ENCODE measurements at regions of chr5 and their contacts with region 1.

Region 1: DNA sequence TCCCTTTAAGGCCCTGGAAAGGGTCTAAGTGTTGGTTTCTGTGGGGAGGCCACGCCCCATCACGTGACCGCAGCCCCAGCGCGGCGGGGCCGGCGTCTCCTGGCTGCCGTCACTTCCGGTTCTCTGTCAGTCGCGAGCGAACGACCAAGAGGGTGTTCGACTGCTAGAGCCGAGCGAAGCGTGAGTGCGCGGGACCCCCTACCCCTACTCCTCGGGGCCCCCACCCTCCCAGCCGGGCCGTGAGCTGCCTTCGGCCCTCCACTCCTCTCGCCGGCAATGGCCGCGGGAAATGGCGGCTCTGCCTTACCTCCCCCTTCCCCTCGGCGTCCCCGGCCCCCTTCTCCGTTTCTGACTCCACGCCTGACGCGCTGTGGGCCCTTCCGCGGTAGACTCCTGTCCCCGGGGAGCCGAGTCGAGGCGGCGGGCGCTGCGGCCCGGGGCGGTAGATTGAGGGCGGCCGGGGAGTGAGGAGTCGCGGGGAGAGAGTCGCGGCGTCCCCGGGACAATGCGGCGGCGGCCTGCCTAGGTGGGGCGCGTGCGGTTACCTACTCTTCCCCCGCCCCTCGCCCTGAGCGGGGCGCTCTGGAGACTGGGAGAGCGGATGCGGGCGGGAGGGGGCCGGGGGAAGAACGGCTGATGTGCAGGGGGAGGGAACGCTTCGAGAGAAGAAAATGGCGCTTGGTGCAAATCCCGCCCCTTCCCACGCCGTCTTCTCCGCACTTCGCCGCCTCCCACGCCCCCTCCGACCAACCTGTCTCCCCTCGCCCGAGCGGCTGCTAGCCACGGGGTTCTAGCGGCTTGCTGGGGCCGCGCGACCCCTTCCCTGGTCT is at the start of gene SUB1:
- DNase-seq: peak; percentile 97
- H3K4me3 ChIP-seq: peak within 1 kb of the TSS; percentile 89 to 97 (median 92)
- H3K27ac ChIP-seq: peak within 1 kb of the TSS; percentile 98 to 100 (median 99)
- H3K4me1 ChIP-seq: peaks cover 0 to 21% (median 14%) of the 10 kb centered on the region in 4 donors
- H3K27me3 ChIP-seq: no peaks in the 10 kb centered on the region
- CTCF ChIP-seq: no peak
- EP300 ChIP-seq: peak in 1 of 4 donors; percentile 58
- POLR2A ChIP-seq: peak; percentile 59 to 78
- total RNA-seq, gene SUB1: 84.0 to 165 (median 113) TPM

Region 2: GRCh38 chr5:32174011-32174870 is 411.4 kb before region 1 on chr5 and contains the start of gene GOLPH3:
- intact Hi-C with region 1: loop called (anchors 5 kb)
- DNase-seq: peak; percentile 96
- H3K4me3 ChIP-seq: peak within 1 kb of the TSS; percentile 76 to 98 (median 92)
- H3K27ac ChIP-seq: peak within 1 kb of the TSS; percentile 99 to 100 (median 100)
- H3K4me1 ChIP-seq: peaks cover 0 to 47% (median 36%) of the 10 kb centered on the region in 4 donors
- H3K27me3 ChIP-seq: no peaks in the 10 kb centered on the region
- CTCF ChIP-seq: no peak
- EP300 ChIP-seq: peak in 2 of 4 donors; percentile 12 to 18
- POLR2A ChIP-seq: peak; percentile 94 to 95
- total RNA-seq, gene GOLPH3: 170 to 247 (median 192) TPM

Region 3: GRCh38 chr5:32312647-32313523 is 272.8 kb before region 1 on chr5 and contains the start of gene MTMR12:
- intact Hi-C with region 1: loop called (anchors 5 kb)
- DNase-seq: peak; percentile 100
- H3K4me3 ChIP-seq: peak within 1 kb of the TSS; percentile 76 to 97 (median 94)
- H3K27ac ChIP-seq: peak within 1 kb of the TSS; percentile 97 to 100 (median 98)
- H3K4me1 ChIP-seq: peaks cover 0 to 47% (median 36%) of the 10 kb centered on the region in 4 donors
- H3K27me3 ChIP-seq: no peaks in the 10 kb centered on the region
- CTCF ChIP-seq: no peak
- EP300 ChIP-seq: no peak
- POLR2A ChIP-seq: peak; percentile 67 to 88
- total RNA-seq, gene MTMR12: 26.7 to 49.9 (median 36.0) TPM

Region 4: GRCh38 chr5:32444431-32445286 is 141.0 kb before region 1 on chr5 and contains the start of gene ZFR:
- intact Hi-C with region 1: loop called (anchors 5 kb)
- DNase-seq: peak; percentile 96
- H3K4me3 ChIP-seq: peak within 1 kb of the TSS; percentile 78 to 92 (median 82)
- H3K27ac ChIP-seq: peak within 1 kb of the TSS; percentile 93 to 96 (median 94)
- H3K4me1 ChIP-seq: peaks cover 0 to 41% (median 27%) of the 10 kb centered on the region in 4 donors
- H3K27me3 ChIP-seq: no peaks in the 10 kb centered on the region
- CTCF ChIP-seq: no peak
- EP300 ChIP-seq: no peak
- POLR2A ChIP-seq: peak; percentile 64 to 72
- total RNA-seq, gene ZFR: 71.8 to 99.9 (median 81.7) TPM

Region 5: GRCh38 chr5:32462618-32463017 is 123.0 kb before region 1 on chr5:
- intact Hi-C with region 1: no loop called
- DNase-seq: no peak
- H3K4me3 ChIP-seq: no peak overlapping the region
- H3K27ac ChIP-seq: no peak overlapping the region
- H3K4me1 ChIP-seq: no peaks in the 10 kb centered on the region
- H3K27me3 ChIP-seq: no peaks in the 10 kb centered on the region
- CTCF ChIP-seq: no peak
- EP300 ChIP-seq: no peak
- POLR2A ChIP-seq: no peak

Region 6: GRCh38 chr5:32504989-32505596 is 80.6 kb before region 1 on chr5:
- intact Hi-C with region 1: loop called (anchors 5 kb)
- DNase-seq: peak; percentile 91
- H3K4me3 ChIP-seq: peak overlapping the region in 2 of 4 donors; percentile 7 to 11
- H3K27ac ChIP-seq: peak overlapping the region; percentile 68 to 83 (median 69)
- H3K4me1 ChIP-seq: peaks cover 0 to 46% (median 38%) of the 10 kb centered on the region in 4 donors
- H3K27me3 ChIP-seq: no peaks in the 10 kb centered on the region
- CTCF ChIP-seq: no peak
- EP300 ChIP-seq: no peak
- POLR2A ChIP-seq: no peak